ENCODE measurements at regions of chr16 and their contacts with region 1.

Region 1: DNA sequence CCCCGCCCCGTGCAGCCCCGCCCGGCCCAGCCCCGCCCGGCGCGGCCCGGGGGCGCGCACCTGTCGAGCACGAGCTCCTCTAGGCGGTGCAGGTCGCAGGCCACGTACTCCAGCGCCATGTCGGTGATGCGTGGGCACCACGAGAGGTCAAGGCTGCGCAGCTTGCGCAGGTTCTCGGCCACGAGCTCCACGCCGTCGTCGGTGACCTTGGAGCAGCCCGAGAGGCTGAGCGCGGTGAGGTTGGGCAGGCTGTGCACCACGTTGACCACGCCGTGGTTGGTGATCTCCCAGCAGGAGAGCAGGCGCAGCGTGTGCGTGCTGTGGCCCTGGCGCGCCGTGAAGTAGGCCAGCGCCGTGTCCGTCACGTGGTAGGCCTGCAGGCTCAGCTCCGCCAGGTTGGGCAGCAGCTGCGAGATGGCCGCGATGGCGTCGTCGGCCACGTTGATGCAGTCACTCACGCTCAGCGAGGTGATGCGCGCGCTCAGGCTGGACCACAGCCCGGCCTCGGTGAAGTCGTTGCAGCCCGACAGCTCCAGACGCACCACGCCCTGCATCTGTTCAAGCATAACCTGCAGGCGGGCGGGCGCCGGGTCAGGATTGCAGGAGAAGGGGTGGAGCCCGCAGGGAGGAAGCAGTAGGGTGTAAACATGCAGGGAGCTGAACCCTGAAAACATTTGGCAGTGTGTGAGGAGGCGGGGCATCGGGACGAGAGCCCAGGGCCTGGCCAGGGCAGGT is 5.3 kb upstream of the WDR24 start:
- DNase-seq: peak; percentile 35 to 79 (median 65)
- H3K4me3 ChIP-seq: peak overlapping the region; percentile 73
- H3K4me3 Mint-ChIP-seq: peak overlapping the region; percentile 76 to 84 (median 80)
- H3K27ac ChIP-seq: peak overlapping the region; percentile 44
- H3K27ac Mint-ChIP-seq: peak overlapping the region in 6 of 8 donors; percentile 5 to 86 (median 64)
- H3K4me1 ChIP-seq: peaks cover 29% of the 10 kb centered on the region
- H3K4me1 Mint-ChIP-seq: peaks cover 27 to 50% (median 31%) of the 10 kb centered on the region in 3 donors
- H3K27me3 ChIP-seq: no peaks in the 10 kb centered on the region
- H3K27me3 Mint-ChIP-seq: peaks cover 0 to 1% of the 10 kb centered on the region in 2 donors

Region 2: GRCh38 chr16:636206-637080 is 59.1 kb before region 1 on chr16 and contains the start of gene METTL26:
- CTCF ChIA-PET with region 1: interaction called, 3 read pairs
- POLR2A ChIA-PET with region 1: interaction called, 11 read pairs
- DNase-seq: peak; percentile 89 to 95 (median 91)
- H3K4me3 ChIP-seq: peak within 1 kb of the TSS; percentile 81
- H3K4me3 Mint-ChIP-seq: peak within 1 kb of the TSS; percentile 92 to 99 (median 98)
- H3K27ac ChIP-seq: peak within 1 kb of the TSS; percentile 80
- H3K27ac Mint-ChIP-seq: peak within 1 kb of the TSS; percentile 95 to 100 (median 97)
- H3K4me1 ChIP-seq: peaks cover 21% of the 10 kb centered on the region
- H3K4me1 Mint-ChIP-seq: peaks cover 0 to 20% (median 10%) of the 10 kb centered on the region in 3 donors
- H3K27me3 ChIP-seq: no peaks in the 10 kb centered on the region
- H3K27me3 Mint-ChIP-seq: peaks cover 0 to 7% of the 10 kb centered on the region in 2 donors
- total RNA-seq, gene METTL26: 129 TPM

Region 3: DNA sequence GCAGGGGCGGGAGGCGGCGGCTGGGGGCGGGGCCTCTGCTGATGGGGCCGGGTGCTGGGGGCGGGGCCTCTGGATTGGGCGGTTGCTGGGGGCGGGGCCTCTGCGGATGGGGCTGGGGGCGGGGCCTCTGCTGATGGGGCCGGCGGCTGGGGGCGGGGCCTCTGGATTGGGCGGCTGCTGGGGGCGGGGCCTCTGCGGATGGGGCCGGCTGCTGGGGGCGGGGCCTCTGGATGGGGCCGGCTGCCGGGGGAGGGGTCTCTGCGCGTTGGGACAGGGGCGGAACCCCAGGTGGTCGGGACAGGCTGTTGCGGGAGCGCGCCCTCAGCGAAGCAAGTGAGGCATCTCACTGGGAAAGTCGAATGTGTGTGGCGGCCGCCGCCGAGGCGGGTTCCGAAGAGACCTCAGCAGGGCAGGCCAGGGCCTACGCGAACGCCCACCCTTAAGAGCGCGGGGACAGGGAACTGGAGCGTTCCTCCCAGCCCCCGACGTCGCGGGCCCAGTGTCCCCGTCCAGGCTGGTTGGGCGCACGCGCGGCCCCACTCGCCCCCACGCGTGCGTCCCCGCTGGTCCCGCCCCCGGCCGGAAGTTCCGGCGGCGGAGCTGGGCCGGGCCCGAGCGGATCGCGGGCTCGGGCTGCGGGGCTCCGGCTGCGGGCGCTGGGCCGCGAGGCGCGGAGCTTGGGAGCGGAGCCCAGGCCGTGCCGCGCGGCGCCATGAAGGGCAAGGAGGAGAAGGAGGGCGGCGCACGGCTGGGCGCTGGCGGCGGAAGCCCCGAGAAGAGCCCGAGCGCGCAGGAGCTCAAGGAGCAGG is 15.5 kb before region 1 on chr16 and contains the start of gene STUB1:
- CTCF ChIA-PET with region 1: interaction called, 7 read pairs
- POLR2A ChIA-PET with region 1: interaction called, 15 read pairs
- DNase-seq: peak; percentile 81 to 91 (median 85)
- H3K4me3 ChIP-seq: peak within 1 kb of the TSS; percentile 67
- H3K4me3 Mint-ChIP-seq: peak within 1 kb of the TSS; percentile 80 to 91 (median 82)
- H3K27ac ChIP-seq: peak within 1 kb of the TSS; percentile 72
- H3K27ac Mint-ChIP-seq: peak within 1 kb of the TSS; percentile 50 to 94 (median 82)
- H3K4me1 ChIP-seq: peaks cover 32% of the 10 kb centered on the region
- H3K4me1 Mint-ChIP-seq: peaks cover 13 to 52% (median 20%) of the 10 kb centered on the region in 3 donors
- H3K27me3 ChIP-seq: no peaks in the 10 kb centered on the region
- H3K27me3 Mint-ChIP-seq: peaks cover 0 to 2% of the 10 kb centered on the region in 2 donors
- total RNA-seq, gene STUB1: 111 to 124 TPM

Region 4: GRCh38 chr16:714558-715476 is 19.3 kb after region 1 on chr16 and contains the start of gene METRN:
- CTCF ChIA-PET with region 1: interaction called, 10 read pairs
- POLR2A ChIA-PET with region 1: interaction called, 21 read pairs
- DNase-seq: peak; percentile 84 to 90 (median 88)
- H3K4me3 ChIP-seq: no peak within 1 kb of the TSS
- H3K4me3 Mint-ChIP-seq: peak within 1 kb of the TSS; percentile 56 to 88 (median 58)
- H3K27ac ChIP-seq: no peak within 1 kb of the TSS
- H3K27ac Mint-ChIP-seq: peak within 1 kb of the TSS in 1 of 8 donors; percentile 54
- H3K4me1 ChIP-seq: peaks cover 14% of the 10 kb centered on the region
- H3K4me1 Mint-ChIP-seq: peaks cover 11 to 25% (median 16%) of the 10 kb centered on the region in 3 donors
- H3K27me3 ChIP-seq: peaks cover 13% of the 10 kb centered on the region
- H3K27me3 Mint-ChIP-seq: peaks cover 0 to 13% of the 10 kb centered on the region in 2 donors
- total RNA-seq, gene METRN: 34.8 to 38.2 TPM

Region 5: GRCh38 chr16:720990-721764 is 25.7 kb after region 1 on chr16 and contains the start of gene ANTKMT:
- CTCF ChIA-PET with region 1: interaction called, 3 read pairs
- POLR2A ChIA-PET with region 1: interaction called, 21 read pairs
- DNase-seq: peak; percentile 68 to 84 (median 83)
- H3K4me3 ChIP-seq: peak within 1 kb of the TSS; percentile 67
- H3K4me3 Mint-ChIP-seq: peak within 1 kb of the TSS; percentile 83 to 97 (median 89)
- H3K27ac ChIP-seq: peak within 1 kb of the TSS; percentile 82
- H3K27ac Mint-ChIP-seq: peak within 1 kb of the TSS; percentile 74 to 98 (median 94)
- H3K4me1 ChIP-seq: peaks cover 31% of the 10 kb centered on the region
- H3K4me1 Mint-ChIP-seq: peaks cover 18 to 49% (median 19%) of the 10 kb centered on the region in 3 donors
- H3K27me3 ChIP-seq: no peaks in the 10 kb centered on the region
- H3K27me3 Mint-ChIP-seq: no peaks in the 10 kb centered on the region
- total RNA-seq, gene ANTKMT: 64.2 to 72.0 TPM

Region 6: DNA sequence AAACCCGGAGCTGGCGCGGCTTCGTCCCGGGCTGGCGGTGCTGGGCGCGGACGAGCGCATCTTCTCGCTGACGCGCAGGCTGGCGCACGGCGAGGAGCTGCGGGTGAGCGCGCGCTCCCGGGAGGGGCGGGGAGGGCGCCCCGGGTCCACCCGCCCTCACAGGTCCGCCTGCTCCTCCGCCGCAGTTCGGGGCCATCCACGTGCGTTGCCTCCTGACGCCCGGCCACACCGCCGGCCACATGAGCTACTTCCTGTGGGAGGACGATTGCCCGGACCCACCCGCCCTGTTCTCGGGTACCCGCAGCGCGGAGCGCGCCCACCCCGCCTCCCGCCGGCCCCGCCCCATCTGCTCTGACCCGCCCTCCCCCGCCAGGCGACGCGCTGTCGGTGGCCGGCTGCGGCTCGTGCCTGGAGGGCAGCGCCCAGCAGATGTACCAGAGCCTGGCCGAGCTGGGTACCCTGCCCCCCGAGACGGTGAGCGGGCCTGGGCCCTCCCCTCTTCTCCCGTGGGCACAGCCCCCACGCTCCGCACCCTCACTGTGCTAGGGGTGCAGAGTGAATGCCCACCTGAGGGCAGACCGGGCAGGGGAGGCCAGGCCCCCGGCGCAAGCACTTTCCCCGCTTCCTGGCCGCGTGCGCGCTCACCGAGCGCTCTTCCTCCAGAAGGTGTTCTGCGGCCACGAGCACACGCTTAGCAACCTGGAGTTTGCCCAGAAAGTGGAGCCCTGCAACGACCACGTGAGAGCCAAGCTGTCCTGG is 32.8 kb after region 1 on chr16:
- CTCF ChIA-PET with region 1: no interaction called
- POLR2A ChIA-PET with region 1: interaction called, 15 read pairs
- DNase-seq: peak; percentile 57 to 81 (median 68)
- H3K4me3 ChIP-seq: no peak overlapping the region
- H3K4me3 Mint-ChIP-seq: peak overlapping the region in 6 of 7 donors; percentile 38 to 74 (median 52)
- H3K27ac ChIP-seq: peak overlapping the region; percentile 38
- H3K27ac Mint-ChIP-seq: peak overlapping the region in 3 of 8 donors; percentile 27 to 53 (median 52)
- H3K4me1 ChIP-seq: peaks cover 6% of the 10 kb centered on the region
- H3K4me1 Mint-ChIP-seq: peaks cover 0 to 16% (median 0%) of the 10 kb centered on the region in 3 donors
- H3K27me3 ChIP-seq: no peaks in the 10 kb centered on the region
- H3K27me3 Mint-ChIP-seq: no peaks in the 10 kb centered on the region

Measured in CD8-positive, alpha-beta memory T cell (primary cell).